Naive thymus-derived CD4-positive, alpha-beta T cell (primary cell): ENCODE measurements at regions of chr4 and their contacts with region 1.

Region 1: DNA sequence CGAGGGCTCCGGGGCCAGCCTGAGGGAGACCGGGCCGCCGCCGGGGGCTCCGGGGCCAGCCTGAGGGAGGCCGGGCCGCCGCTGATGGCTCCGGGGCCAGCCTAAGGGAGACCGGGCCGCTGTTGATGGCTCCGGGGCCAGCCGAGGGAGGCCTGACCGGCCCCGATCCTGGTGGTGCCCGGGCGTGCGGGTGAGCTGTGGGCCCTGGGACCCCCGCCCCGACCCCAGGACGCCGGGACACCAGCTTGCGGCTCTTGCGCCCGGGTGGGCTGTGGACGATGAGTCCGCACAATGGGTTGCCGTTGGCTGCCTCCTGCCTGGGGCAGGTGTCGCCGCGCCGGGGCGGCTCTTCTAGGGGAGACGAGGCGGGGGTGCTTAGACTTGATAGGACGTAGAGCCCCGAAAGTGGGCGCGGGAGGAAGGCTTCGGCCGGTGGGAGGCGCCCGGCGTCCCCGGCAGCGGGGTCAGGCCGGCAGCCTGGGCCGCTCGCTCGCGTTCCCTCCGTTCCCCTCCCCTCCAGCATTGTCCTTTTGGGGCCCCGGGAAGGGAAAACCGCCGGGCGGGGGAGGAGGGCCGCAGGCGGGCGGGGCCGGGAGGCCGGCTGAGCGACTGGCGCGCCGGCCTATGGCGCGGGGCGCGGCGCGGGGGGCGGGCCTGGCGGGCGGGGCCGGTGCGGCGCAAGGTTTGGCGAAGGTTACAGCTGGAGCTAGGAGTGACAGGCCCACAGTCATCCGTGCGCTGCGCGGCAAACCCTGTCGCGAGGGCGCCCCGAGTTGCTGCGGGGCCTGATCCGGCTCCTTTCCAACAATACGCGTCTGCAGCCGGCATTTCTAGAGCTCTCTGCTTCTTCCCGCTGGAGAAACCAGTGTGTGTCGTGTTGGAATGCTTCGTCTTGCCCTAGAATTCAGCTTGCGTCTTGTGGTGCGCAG is 790 bp downstream of the KIAA0232 start:
- DNase-seq: peak; percentile 80 to 92 (median 87)
- ATAC-seq: peak; percentile 85
- H3K4me3 ChIP-seq: peak overlapping the region; percentile 85
- H3K4me3 Mint-ChIP-seq: peak overlapping the region; percentile 82 to 88 (median 86)
- H3K27ac ChIP-seq: peak overlapping the region; percentile 97
- H3K27ac Mint-ChIP-seq: peak overlapping the region; percentile 64 to 93 (median 84)
- H3K4me1 ChIP-seq: peaks cover 20 to 21% of the 10 kb centered on the region in 2 donors
- H3K4me1 Mint-ChIP-seq: peaks cover 39 to 75% (median 68%) of the 10 kb centered on the region in 7 donors
- H3K27me3 ChIP-seq: no peaks in the 10 kb centered on the region
- H3K27me3 Mint-ChIP-seq: no peaks in the 10 kb centered on the region

Region 2: GRCh38 chr4:5371415-5372190 is 1411.7 kb before region 1 on chr4:
- CTCF ChIA-PET with region 1: no interaction called
- POLR2A ChIA-PET with region 1: no interaction called
- intact Hi-C with region 1: no loop called
- DNase-seq: no peak
- ATAC-seq: no peak
- H3K4me3 ChIP-seq: no peak overlapping the region
- H3K4me3 Mint-ChIP-seq: no peak overlapping the region
- H3K27ac ChIP-seq: no peak overlapping the region
- H3K27ac Mint-ChIP-seq: no peak overlapping the region
- H3K4me1 ChIP-seq: no peaks in the 10 kb centered on the region
- H3K4me1 Mint-ChIP-seq: peaks cover 0 to 1% (median 0%) of the 10 kb centered on the region in 7 donors
- H3K27me3 ChIP-seq: no peaks in the 10 kb centered on the region
- H3K27me3 Mint-ChIP-seq: peaks cover 0 to 4% (median 0%) of the 10 kb centered on the region in 5 donors

Region 3: GRCh38 chr4:6640292-6641163 is 142.8 kb before region 1 on chr4 and contains the start of gene MRFAP1:
- CTCF ChIA-PET with region 1: no interaction called
- POLR2A ChIA-PET with region 1: interaction called, 3 read pairs
- intact Hi-C with region 1: loop called (anchors 1 kb)
- DNase-seq: peak; percentile 84 to 97 (median 95)
- ATAC-seq: peak; percentile 94
- H3K4me3 ChIP-seq: peak within 1 kb of the TSS; percentile 100
- H3K4me3 Mint-ChIP-seq: peak within 1 kb of the TSS; percentile 94 to 100 (median 99)
- H3K27ac ChIP-seq: peak within 1 kb of the TSS; percentile 97
- H3K27ac Mint-ChIP-seq: peak within 1 kb of the TSS; percentile 99 to 100 (median 99)
- H3K4me1 ChIP-seq: peaks cover 13 to 23% of the 10 kb centered on the region in 2 donors
- H3K4me1 Mint-ChIP-seq: peaks cover 26 to 52% (median 37%) of the 10 kb centered on the region in 7 donors
- H3K27me3 ChIP-seq: no peaks in the 10 kb centered on the region
- H3K27me3 Mint-ChIP-seq: no peaks in the 10 kb centered on the region
- total RNA-seq, gene MRFAP1: 120 to 187 (median 139) TPM

Region 4: DNA sequence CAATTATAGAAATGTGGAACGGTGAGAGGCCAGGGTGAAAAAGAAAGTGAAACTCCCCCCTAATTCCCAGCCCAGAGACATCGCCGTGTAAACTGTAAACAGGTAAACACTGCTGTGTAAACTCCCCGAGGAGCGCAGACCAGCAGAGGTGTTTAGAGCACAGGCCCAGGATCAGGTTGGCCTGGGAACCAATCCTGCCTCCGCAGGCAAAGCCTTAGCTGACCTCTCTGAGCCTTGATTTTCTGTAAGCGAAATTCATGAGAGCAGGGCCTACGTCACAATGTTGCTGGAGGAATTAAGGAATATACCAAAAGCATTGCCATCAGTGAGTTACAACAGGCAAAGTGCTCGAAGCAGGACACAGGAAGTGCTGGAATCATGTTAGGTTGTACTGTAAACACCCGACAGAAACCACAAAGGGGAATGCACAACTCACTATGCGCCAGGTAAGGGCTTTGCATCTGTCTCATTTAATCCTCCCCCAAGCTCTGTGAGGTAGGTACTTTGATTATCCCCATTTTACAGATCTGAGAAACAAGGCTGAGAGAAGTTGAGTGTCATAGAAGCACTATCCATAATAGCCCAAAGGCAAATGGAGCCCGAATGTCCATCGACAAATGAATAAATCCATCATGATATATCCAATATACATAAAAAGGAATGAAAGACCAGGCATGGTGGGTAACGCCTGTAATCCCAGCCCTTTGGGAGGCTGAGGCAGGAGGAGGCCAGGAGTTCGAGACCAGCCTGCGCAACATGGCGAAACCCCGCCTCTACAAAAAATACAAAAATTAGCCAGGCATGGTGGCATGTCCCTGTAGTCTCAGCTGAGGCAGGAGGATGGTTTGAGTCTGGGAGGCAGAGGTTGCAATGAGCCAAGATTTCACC is 31.5 kb before region 1 on chr4:
- CTCF ChIA-PET with region 1: no interaction called
- POLR2A ChIA-PET with region 1: no interaction called
- intact Hi-C with region 1: loop called in 1 of 2 experiments (anchors 1 kb)
- DNase-seq: no peak
- ATAC-seq: no peak
- H3K4me3 ChIP-seq: peak overlapping the region; percentile 38
- H3K4me3 Mint-ChIP-seq: peak overlapping the region in 9 of 10 donors; percentile 27 to 80 (median 60)
- H3K27ac ChIP-seq: no peak overlapping the region
- H3K27ac Mint-ChIP-seq: peak overlapping the region in 7 of 9 donors; percentile 4 to 87 (median 61)
- H3K4me1 ChIP-seq: peaks cover 0 to 3% of the 10 kb centered on the region in 2 donors
- H3K4me1 Mint-ChIP-seq: peaks cover 0 to 12% (median 9%) of the 10 kb centered on the region in 7 donors
- H3K27me3 ChIP-seq: no peaks in the 10 kb centered on the region
- H3K27me3 Mint-ChIP-seq: no peaks in the 10 kb centered on the region

Region 5: GRCh38 chr4:6942238-6942800 is 159.0 kb after region 1 on chr4:
- CTCF ChIA-PET with region 1: no interaction called
- POLR2A ChIA-PET with region 1: no interaction called
- intact Hi-C with region 1: loop called in 1 of 2 experiments (anchors 1 kb)
- DNase-seq: peak in 8 of 9 donors; percentile 47 to 76 (median 64)
- ATAC-seq: peak; percentile 87
- H3K4me3 ChIP-seq: peak overlapping the region; percentile 46
- H3K4me3 Mint-ChIP-seq: peak overlapping the region; percentile 73 to 91 (median 83)
- H3K27ac ChIP-seq: peak overlapping the region; percentile 57
- H3K27ac Mint-ChIP-seq: peak overlapping the region; percentile 76 to 94 (median 90)
- H3K4me1 ChIP-seq: peaks cover 46 to 51% of the 10 kb centered on the region in 2 donors
- H3K4me1 Mint-ChIP-seq: peaks cover 48 to 85% (median 74%) of the 10 kb centered on the region in 7 donors
- H3K27me3 ChIP-seq: no peaks in the 10 kb centered on the region
- H3K27me3 Mint-ChIP-seq: no peaks in the 10 kb centered on the region

Region 6: DNA sequence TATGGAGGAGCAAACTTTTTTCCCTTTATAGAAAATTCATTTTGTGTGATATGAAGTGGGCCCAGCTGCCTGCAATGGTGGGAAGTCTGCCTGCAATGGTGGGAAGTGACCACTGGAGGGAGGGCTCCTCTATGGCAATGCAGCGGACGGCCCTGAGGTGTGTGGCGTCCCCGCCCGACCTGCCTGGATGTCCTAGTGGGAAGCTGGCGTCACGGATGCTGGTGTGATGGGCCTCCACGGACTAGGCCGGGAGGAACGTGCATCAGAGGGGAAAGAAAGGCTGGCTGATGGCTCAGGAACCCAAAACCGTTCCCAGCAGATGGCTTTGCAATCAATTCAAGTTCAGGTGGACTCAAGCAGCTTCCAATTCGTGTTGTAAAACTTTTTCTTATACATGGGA is 978.4 kb after region 1 on chr4:
- CTCF ChIA-PET with region 1: no interaction called
- POLR2A ChIA-PET with region 1: no interaction called
- intact Hi-C with region 1: loop called in 1 of 2 experiments (anchors 5 kb)
- DNase-seq: peak in 8 of 9 donors; percentile 33 to 65 (median 52)
- ATAC-seq: peak; percentile 74
- H3K4me3 ChIP-seq: no peak overlapping the region
- H3K4me3 Mint-ChIP-seq: peak overlapping the region in 5 of 10 donors; percentile 27 to 49 (median 37)
- H3K27ac ChIP-seq: peak overlapping the region; percentile 10
- H3K27ac Mint-ChIP-seq: peak overlapping the region; percentile 47 to 100 (median 92)
- H3K4me1 ChIP-seq: peaks cover 18 to 30% of the 10 kb centered on the region in 2 donors
- H3K4me1 Mint-ChIP-seq: peaks cover 13 to 49% (median 37%) of the 10 kb centered on the region in 7 donors
- H3K27me3 ChIP-seq: no peaks in the 10 kb centered on the region
- H3K27me3 Mint-ChIP-seq: no peaks in the 10 kb centered on the region